HepG2 (cell line): ENCODE measurements at regions of chr13 and their contacts with region 1.

Region 1: DNA sequence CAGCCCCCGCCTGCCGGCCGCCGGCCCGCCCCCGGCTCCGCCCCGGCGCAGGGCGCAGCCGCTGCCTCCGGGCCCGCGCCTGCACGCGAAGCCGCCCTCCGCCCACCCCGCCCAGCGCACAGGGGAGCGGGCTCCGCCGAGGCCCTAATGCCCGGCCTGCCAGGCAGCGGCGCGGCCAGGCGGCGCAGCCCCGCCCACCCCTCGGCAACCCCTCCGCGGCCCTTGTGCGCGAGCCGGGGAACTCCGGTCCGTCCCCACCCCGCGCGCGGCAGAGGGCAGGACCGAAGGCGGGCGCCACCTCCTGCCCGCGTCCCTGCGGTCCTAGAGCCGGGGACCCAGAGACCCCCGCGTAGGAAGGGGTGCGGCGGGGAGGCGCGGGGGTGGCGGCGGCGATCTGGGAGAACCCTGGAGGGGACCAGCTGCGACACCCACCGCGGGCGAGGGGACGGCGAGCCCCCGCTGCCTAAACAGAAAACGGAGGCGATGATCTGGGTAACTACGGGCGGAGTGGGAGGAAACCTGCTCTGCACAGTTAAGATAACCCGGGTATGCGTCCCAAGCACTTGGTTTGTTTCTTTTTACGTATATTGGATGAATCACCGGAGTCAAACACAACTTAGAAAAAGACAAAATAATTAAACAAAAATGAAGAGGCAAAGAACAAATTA is 350 bp upstream of the USP12 start:
- DNase-seq: peak; percentile 62
- ATAC-seq: peak; percentile 94
- H3K4me3 ChIP-seq: peak overlapping the region; percentile 83 to 92 (median 87)
- H3K27ac ChIP-seq: peak overlapping the region; percentile 35
- H3K4me1 ChIP-seq: peaks cover 33% of the 10 kb centered on the region
- H3K27me3 ChIP-seq: peaks cover 0 to 3% of the 10 kb centered on the region in 2 experiments; a peak in 1 of 5 replicates
- CTCF ChIP-seq: peak; percentile 59
- EP300 ChIP-seq: no peak
- POLR2A ChIP-seq: peak in 1 of 2 experiments; percentile 9; a peak in 1 of 4 replicates
- RAD21 ChIP-seq: no peak

Region 2: DNA sequence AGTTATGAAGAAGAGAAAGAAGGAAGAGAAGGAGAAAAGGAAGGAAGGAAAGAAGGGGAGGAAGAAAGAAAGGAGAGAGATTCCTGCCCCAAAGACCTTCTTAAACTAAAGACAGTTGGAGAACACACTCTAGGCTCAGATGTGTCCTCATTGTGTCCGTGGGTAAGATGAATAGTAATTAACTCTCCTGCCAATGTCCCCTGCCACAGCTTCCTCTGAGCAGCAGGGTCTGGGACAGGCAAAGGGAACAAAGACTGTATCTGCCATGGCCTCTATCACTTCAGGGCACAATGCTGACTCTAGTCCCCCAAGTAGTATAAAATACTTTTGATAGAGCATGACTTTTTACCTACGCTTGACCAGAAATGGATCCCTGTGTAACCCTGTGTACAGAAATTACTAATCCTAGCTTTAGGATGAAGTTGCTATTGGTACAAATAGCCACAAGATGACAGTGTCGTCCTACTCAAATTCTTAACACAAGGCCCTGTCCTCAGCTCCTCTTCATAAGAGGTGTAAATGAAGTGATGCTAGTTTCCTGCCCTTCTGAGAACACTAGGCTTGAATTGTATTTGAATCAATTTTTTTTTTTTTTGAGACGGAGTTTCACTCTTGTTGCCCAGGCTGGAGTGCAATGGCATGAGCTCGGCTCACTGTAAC is 225.1 kb before region 1 on chr13:
- CTCF ChIA-PET with region 1: no interaction called
- POLR2A ChIA-PET with region 1: no interaction called
- in situ Hi-C with region 1: no loop called
- intact Hi-C with region 1: loop called (anchors 5 kb)
- DNase-seq: peak; percentile 64
- ATAC-seq: peak; percentile 80
- H3K4me3 ChIP-seq: no peak overlapping the region
- H3K27ac ChIP-seq: no peak overlapping the region
- H3K4me1 ChIP-seq: peaks cover 37% of the 10 kb centered on the region
- H3K27me3 ChIP-seq: no peaks in the 10 kb centered on the region
- CTCF ChIP-seq: peak; percentile 90
- EP300 ChIP-seq: no peak
- POLR2A ChIP-seq: no peak
- RAD21 ChIP-seq: peak; percentile 87

Region 3: GRCh38 chr13:26991508-26992181 is 180.3 kb before region 1 on chr13:
- CTCF ChIA-PET with region 1: no interaction called
- POLR2A ChIA-PET with region 1: interaction called, 5 read pairs
- in situ Hi-C with region 1: loop called (anchors 10 kb)
- intact Hi-C with region 1: loop called (anchors 2 kb)
- DNase-seq: peak; percentile 97
- ATAC-seq: peak; percentile 76
- H3K4me3 ChIP-seq: peak overlapping the region; percentile 23 to 61 (median 34); a peak in 5 of 6 replicates
- H3K27ac ChIP-seq: peak overlapping the region; percentile 95
- H3K4me1 ChIP-seq: peaks cover 85% of the 10 kb centered on the region
- H3K27me3 ChIP-seq: no peaks in the 10 kb centered on the region
- CTCF ChIP-seq: no peak
- EP300 ChIP-seq: peak in 1 of 2 experiments; percentile 83; a peak in 2 of 4 replicates
- POLR2A ChIP-seq: peak in 1 of 2 experiments; percentile 79; a peak in 3 of 4 replicates
- RAD21 ChIP-seq: 0 out of 2 replicates have a peak, but pooled peaks have one; percentile 7

Region 4: DNA sequence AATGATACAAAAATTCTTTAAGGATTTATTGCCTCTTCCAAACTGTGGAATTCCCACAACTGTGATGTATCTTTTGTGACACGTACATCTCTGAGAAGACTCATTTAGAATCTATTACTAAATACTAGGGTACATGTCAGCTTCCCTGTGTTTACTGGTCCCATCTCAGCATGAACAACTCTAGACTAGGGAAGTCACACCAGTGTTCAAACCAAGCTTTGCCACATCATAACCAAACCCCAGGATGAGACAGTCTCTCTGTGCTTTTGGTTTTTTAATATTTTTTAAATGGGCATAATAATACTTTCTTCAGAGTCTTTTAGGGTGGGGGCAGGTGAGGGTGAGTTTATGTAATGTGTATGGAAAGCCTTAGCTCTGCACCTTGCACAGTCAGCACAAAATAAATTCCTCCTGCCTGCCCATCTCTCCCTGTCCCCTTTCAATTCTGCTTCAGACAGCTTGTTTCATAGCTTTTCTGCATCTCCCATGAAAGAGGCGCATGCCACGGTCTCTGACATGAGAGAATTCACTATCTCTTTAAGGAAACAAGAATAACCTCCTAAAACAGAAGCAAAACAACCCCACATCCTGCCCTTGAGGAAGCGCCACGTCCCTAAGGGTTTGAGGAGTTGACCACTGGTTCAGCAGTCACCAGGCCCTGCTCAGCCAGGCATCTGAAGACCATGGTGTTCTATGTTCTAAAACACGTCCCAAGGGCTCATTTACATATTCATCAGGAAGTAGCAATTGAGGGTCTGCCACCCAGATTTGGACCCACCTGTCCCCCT is 174.8 kb before region 1 on chr13:
- CTCF ChIA-PET with region 1: no interaction called
- POLR2A ChIA-PET with region 1: no interaction called
- in situ Hi-C with region 1: loop called (anchors 10 kb)
- intact Hi-C with region 1: no loop called
- DNase-seq: no peak
- ATAC-seq: no peak
- H3K4me3 ChIP-seq: no peak overlapping the region
- H3K27ac ChIP-seq: no peak overlapping the region
- H3K4me1 ChIP-seq: peaks cover 42% of the 10 kb centered on the region
- H3K27me3 ChIP-seq: peaks cover 0 to 22% of the 10 kb centered on the region in 2 experiments; a peak in 2 of 5 replicates
- CTCF ChIP-seq: no peak
- EP300 ChIP-seq: no peak
- POLR2A ChIP-seq: no peak
- RAD21 ChIP-seq: no peak

Region 5: GRCh38 chr13:27130979-27131623 is 40.9 kb before region 1 on chr13:
- CTCF ChIA-PET with region 1: no interaction called
- POLR2A ChIA-PET with region 1: no interaction called
- in situ Hi-C with region 1: no loop called
- intact Hi-C with region 1: loop called (anchors 5 kb)
- DNase-seq: no peak
- ATAC-seq: no peak
- H3K4me3 ChIP-seq: no peak overlapping the region
- H3K27ac ChIP-seq: no peak overlapping the region
- H3K4me1 ChIP-seq: peaks cover 51% of the 10 kb centered on the region
- H3K27me3 ChIP-seq: no peaks in the 10 kb centered on the region
- CTCF ChIP-seq: no peak
- EP300 ChIP-seq: no peak
- POLR2A ChIP-seq: no peak
- RAD21 ChIP-seq: no peak

Region 6: GRCh38 chr13:27203854-27204253 is 31.9 kb after region 1 on chr13:
- CTCF ChIA-PET with region 1: no interaction called
- POLR2A ChIA-PET with region 1: no interaction called
- in situ Hi-C with region 1: no loop called
- intact Hi-C with region 1: no loop called
- DNase-seq: peak; percentile 14
- ATAC-seq: peak; percentile 50; the same call in 2 of the 3 replicates
- H3K4me3 ChIP-seq: no peak overlapping the region
- H3K27ac ChIP-seq: no peak overlapping the region
- H3K4me1 ChIP-seq: no peaks in the 10 kb centered on the region
- H3K27me3 ChIP-seq: 0 out of 5 replicates have a peak, but pooled peaks cover 0 to 4% of the 10 kb centered on the region in 2 experiments
- CTCF ChIP-seq: peak; percentile 33
- EP300 ChIP-seq: no peak
- POLR2A ChIP-seq: no peak
- RAD21 ChIP-seq: no peak

Region 7: GRCh38 chr13:27251166-27252091 is 79.5 kb after region 1 on chr13 and contains the start of gene RPL21:
- CTCF ChIA-PET with region 1: no interaction called
- POLR2A ChIA-PET with region 1: no interaction called
- in situ Hi-C with region 1: no loop called
- intact Hi-C with region 1: loop called (anchors 5 kb)
- DNase-seq: peak; percentile 91
- ATAC-seq: peak; percentile 96
- H3K4me3 ChIP-seq: peak within 1 kb of the TSS; percentile 84 to 89 (median 85)
- H3K27ac ChIP-seq: peak within 1 kb of the TSS; percentile 92
- H3K4me1 ChIP-seq: peaks cover 38% of the 10 kb centered on the region
- H3K27me3 ChIP-seq: no peaks in the 10 kb centered on the region; a peak in 1 of 5 replicates
- CTCF ChIP-seq: no peak; the same call in 1 of the 2 replicates
- EP300 ChIP-seq: peak in 1 of 2 experiments; percentile 4; a peak in 1 of 4 replicates
- POLR2A ChIP-seq: peak; percentile 86 to 88
- RAD21 ChIP-seq: 0 out of 2 replicates have a peak, but pooled peaks have one; percentile 35
- total RNA-seq, gene RPL21: 1,234 and 1,660 TPM in 2 replicates